ENCODE measurements at regions of chr12 and their contacts with region 1.

Region 1: DNA sequence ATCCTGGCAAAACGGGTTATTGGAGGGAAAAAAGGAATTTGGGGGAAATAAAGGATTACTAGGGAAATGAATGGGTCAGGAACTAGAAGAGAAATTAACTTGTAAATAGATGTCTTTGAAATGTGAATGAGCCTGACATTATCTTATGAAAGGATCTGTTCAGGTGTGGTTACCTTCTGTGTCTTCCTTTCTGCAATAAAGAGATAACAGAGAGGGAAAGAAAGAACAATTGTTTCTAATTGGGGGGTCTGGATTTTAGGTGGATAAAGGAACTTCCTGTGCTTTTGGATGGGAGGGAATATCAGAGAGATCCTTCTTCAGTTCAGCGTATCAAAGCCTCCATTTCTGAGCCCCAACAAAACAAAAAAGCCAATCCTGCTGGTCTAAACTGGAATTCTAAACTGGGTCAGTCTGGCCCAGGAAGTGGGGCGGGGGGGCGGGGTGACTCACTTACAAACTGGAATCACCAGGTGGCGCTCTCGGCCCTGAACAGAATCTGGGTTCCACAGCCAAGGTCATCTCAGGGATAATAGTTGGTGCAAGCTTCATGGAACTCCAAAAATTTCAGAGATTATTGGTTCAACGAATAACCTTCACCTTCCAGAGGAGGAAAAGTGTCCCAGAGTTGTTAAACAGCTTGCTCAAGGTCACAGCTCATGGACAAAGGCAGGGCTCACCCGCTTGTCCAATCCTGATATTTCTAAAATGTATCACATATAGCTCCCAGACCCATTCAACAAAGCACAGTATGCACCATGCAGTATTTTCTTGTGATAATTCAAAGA is 15.2 kb upstream of the PEBP1 start:
- DNase-seq: peak in 1 of 2 experiments; percentile 51
- H3K4me3 ChIP-seq: no peak overlapping the region
- H3K27ac ChIP-seq: no peak overlapping the region
- H3K4me1 ChIP-seq: no peaks in the 10 kb centered on the region
- H3K27me3 ChIP-seq: no peaks in the 10 kb centered on the region
- CTCF ChIP-seq: peak; percentile 67

Region 2: DNA sequence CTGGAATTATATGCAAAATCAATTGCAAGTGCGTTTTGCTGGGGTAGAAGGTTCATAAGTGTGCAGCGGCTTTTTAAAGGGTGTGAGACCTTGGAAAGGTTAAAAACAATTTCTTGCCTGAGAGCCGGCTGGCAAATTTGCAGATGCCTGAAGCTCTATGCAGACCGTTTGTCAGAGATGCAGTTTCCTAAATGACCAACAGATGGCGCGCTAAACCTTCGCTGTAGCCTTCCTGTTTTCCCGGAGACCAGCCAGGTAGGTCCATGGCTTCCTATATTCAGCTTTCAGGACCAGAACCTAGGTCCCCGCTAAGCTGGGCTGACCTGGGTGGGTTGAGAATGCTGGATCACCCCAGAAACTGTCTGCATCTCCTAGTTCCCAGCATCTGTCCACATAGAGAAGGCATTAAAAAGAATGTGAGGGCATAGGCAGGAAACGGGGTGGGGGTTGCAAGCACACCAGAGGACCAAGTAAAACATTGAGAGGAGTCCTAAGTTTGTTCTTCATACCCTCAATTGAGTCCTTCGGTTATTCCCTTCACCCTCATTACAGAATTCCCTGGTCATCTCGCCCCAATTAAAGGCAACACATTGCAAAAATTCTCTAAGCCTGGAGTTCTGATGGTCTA is 753.6 kb before region 1 on chr12:
- CTCF ChIA-PET with region 1: no interaction called
- POLR2A ChIA-PET with region 1: no interaction called
- intact Hi-C with region 1: no loop called
- DNase-seq: peak; percentile 50 to 63
- H3K4me3 ChIP-seq: no peak overlapping the region
- H3K27ac ChIP-seq: no peak overlapping the region
- H3K4me1 ChIP-seq: no peaks in the 10 kb centered on the region
- H3K27me3 ChIP-seq: peaks cover 37% of the 10 kb centered on the region
- CTCF ChIP-seq: peak; percentile 94

Region 3: GRCh38 chr12:117494833-117495655 is 625.7 kb before region 1 on chr12:
- CTCF ChIA-PET with region 1: no interaction called
- POLR2A ChIA-PET with region 1: no interaction called
- intact Hi-C with region 1: no loop called
- DNase-seq: no peak
- H3K4me3 ChIP-seq: no peak overlapping the region
- H3K27ac ChIP-seq: no peak overlapping the region
- H3K4me1 ChIP-seq: no peaks in the 10 kb centered on the region
- H3K27me3 ChIP-seq: peaks cover 7% of the 10 kb centered on the region
- CTCF ChIP-seq: no peak

Region 4: DNA sequence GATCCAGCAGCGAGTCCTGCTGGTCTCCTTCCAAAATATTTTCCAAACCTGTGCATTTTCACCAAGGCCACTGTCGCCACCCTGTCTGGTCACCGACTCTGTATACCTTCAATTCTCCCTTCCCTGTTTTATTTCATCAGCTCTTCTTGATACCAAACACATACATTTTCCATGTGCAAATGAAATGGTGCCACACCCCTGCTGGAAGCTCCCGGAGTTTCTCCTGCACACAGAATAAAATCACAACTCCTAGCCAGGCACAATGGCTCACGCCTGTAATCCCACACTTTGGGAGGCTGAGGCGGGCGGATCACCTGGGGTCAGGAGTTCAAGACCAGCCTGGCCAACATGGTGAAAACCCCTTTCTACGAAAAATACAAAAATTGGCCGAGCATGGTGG is 31.0 kb before region 1 on chr12:
- CTCF ChIA-PET with region 1: no interaction called
- POLR2A ChIA-PET with region 1: interaction called, 22 read pairs
- intact Hi-C with region 1: no loop called
- DNase-seq: no peak
- H3K4me3 ChIP-seq: no peak overlapping the region
- H3K27ac ChIP-seq: no peak overlapping the region
- H3K4me1 ChIP-seq: no peaks in the 10 kb centered on the region
- H3K27me3 ChIP-seq: no peaks in the 10 kb centered on the region
- CTCF ChIP-seq: no peak

Region 5: GRCh38 chr12:118183705-118184104 is 62.9 kb after region 1 on chr12:
- CTCF ChIA-PET with region 1: interaction called, 3 read pairs
- POLR2A ChIA-PET with region 1: no interaction called
- intact Hi-C with region 1: loop called (anchors 5 kb)
- DNase-seq: no peak
- H3K4me3 ChIP-seq: no peak overlapping the region
- H3K27ac ChIP-seq: peak overlapping the region; percentile 55; the same call in 1 of the 2 replicates
- H3K4me1 ChIP-seq: peaks cover 5% of the 10 kb centered on the region; the same call in 1 of the 2 replicates
- H3K27me3 ChIP-seq: no peaks in the 10 kb centered on the region
- CTCF ChIP-seq: no peak